Activated CD4-positive, alpha-beta T cell treated with anti-CD3 and anti-CD28 coated beads, Interleukin-2, amount 10 ng/mL, durations not matched to agents 24 days and 14 days (primary cell): ENCODE measurements at regions of chr1 and their contacts with region 1.

Region 1: DNA sequence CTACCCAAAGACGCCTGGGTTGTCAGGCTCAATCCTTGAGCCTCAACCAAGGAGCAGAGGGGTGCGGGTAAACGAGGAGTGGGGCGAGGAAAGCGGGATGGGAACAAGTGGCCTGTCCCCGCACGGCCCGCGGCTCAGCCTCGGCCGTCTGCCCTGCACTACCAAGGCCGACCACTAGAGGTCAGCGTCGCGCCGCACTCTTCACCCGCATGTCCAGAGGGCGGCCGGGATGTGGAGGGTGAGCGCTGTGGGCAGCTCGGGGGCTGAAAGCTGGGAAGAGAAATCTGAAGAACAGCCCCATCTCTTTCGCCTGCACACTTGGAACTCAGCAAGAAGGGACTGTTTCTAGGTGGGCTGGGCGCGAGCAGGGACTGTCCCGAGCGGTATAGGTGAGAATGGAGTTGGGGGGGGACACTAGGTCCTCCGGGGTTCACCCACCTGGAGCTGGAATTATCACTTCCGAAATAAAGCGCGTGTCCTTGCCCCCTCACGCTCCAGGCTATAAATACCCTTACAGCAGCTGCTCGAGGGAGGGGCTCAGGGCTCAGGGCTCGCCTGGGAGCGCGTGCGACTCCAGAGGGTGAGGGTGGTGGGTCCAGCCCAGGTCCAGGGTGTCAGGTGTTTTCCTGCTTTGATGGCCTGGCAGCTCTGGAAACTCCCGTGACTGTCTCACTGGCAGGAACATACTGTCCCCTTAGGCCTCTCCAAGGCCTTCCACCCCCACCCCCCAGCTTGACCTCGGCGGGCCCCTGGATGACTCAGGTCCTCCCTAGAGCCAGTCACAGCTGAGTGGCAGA is 9.8 kb downstream of the SLC30A2 start:
- DNase-seq: peak; percentile 95
- H3K4me3 Mint-ChIP-seq: peak overlapping the region; percentile 91
- H3K27ac Mint-ChIP-seq: peak overlapping the region; percentile 63
- H3K4me1 Mint-ChIP-seq: peaks cover 13% of the 10 kb centered on the region
- H3K27me3 Mint-ChIP-seq: peaks cover 13% of the 10 kb centered on the region

Region 2: GRCh38 chr1:26145041-26145959 is 109.1 kb after region 1 on chr1:
- intact Hi-C with region 1: loop called (anchors 1 kb)
- DNase-seq: peak; percentile 93
- H3K4me3 Mint-ChIP-seq: no peak overlapping the region
- H3K27ac Mint-ChIP-seq: no peak overlapping the region
- H3K4me1 Mint-ChIP-seq: peaks cover 2% of the 10 kb centered on the region
- H3K27me3 Mint-ChIP-seq: peaks cover 24% of the 10 kb centered on the region

Region 3: GRCh38 chr1:26161415-26162219 is 125.5 kb after region 1 on chr1:
- intact Hi-C with region 1: loop called (anchors 1 kb)
- DNase-seq: peak; percentile 82
- H3K4me3 Mint-ChIP-seq: peak overlapping the region; percentile 78
- H3K27ac Mint-ChIP-seq: no peak overlapping the region
- H3K4me1 Mint-ChIP-seq: peaks cover 23% of the 10 kb centered on the region
- H3K27me3 Mint-ChIP-seq: peaks cover 45% of the 10 kb centered on the region

Region 4: DNA sequence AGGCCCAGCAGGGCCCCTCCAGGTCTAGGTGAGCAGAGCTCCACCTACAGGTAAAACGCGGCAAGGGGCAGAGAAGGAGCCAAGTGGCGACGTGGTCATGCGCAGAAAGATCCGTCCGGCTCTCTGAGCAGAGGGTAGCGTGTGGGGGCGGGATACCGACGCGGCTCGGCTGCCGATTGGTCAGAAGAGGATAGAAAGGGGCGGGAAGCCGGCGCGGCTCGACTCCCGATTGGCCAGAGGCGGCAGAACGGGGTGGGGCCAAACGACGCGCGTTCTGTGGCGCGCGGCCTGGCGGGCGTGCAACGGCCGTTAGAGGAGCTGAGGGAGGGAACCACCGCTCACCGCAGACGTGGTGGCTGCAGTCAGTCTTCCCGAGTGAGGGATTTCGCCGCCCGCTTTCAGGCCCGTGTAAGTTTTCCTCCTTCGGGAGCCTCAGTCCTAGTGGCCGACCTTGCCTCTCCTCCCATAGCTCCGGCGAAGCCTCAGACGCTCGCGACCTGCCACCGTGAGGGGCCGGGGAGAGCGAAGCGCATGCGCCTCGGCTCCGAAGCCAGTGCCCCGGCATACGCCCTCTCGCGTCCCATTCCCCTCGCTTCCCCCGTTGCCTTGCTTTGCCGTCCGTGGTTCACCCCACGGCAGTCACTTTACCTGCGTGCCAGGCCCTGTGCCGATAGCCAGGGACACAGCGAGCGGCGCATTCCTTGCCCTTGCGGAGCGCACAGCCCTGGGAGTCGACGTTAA is 197.9 kb after region 1 on chr1 and contains the start of gene CEP85:
- intact Hi-C with region 1: loop called (anchors 5 kb)
- DNase-seq: peak; percentile 99
- H3K4me3 Mint-ChIP-seq: peak within 1 kb of the TSS; percentile 96
- H3K27ac Mint-ChIP-seq: peak within 1 kb of the TSS; percentile 91
- H3K4me1 Mint-ChIP-seq: peaks cover 31% of the 10 kb centered on the region
- H3K27me3 Mint-ChIP-seq: peaks cover 6% of the 10 kb centered on the region
- total RNA-seq, gene CEP85: 39.3 and 40.8 TPM in 2 replicates